ENCODE measurements at regions of chr12 and their contacts with region 1.

Region 1: GRCh38 chr12:120469450-120470149 is at the start of gene SRSF9:
- DNase-seq: peak; percentile 97 to 98 (median 97)
- H3K4me3 ChIP-seq: peak within 1 kb of the TSS; percentile 75 to 84
- H3K4me3 Mint-ChIP-seq: peak within 1 kb of the TSS; percentile 87 to 94 (median 91)
- H3K27ac ChIP-seq: peak within 1 kb of the TSS; percentile 79
- H3K27ac Mint-ChIP-seq: peak within 1 kb of the TSS; percentile 89 to 97 (median 92)
- H3K4me1 ChIP-seq: peaks cover 40% of the 10 kb centered on the region
- H3K4me1 Mint-ChIP-seq: peaks cover 10 to 62% (median 35%) of the 10 kb centered on the region in 4 donors
- H3K27me3 ChIP-seq: no peaks in the 10 kb centered on the region
- H3K27me3 Mint-ChIP-seq: no peaks in the 10 kb centered on the region
- total RNA-seq, gene SRSF9: 139 to 143 TPM

Region 2: DNA sequence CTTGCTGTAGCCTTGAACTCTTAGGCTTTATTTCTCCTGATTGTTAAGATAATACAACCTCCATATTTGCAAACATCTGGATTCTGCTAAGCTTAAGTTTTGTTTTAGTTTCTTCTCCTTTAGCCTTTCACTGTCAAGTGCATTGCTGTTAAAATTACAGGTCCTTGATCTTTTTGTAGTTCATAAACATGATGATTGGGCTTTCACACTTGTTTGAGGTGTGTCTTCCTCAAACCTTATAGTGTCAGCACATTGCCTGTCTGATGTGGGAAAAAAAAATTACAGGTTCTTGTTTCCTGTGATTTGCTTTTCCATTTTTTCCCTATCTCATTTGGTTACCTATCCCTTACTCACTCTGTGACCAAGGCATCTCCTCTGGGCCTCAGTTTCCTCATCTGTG is 421.3 kb before region 1 on chr12:
- CTCF ChIA-PET with region 1: no interaction called
- POLR2A ChIA-PET with region 1: no interaction called
- intact Hi-C with region 1: no loop called
- DNase-seq: peak in 4 of 5 donors; percentile 9 to 33 (median 14)
- H3K4me3 ChIP-seq: no peak overlapping the region
- H3K4me3 Mint-ChIP-seq: peak overlapping the region in 6 of 8 donors; percentile 5 to 64 (median 53)
- H3K27ac ChIP-seq: peak overlapping the region; percentile 37
- H3K27ac Mint-ChIP-seq: peak overlapping the region; percentile 77 to 94 (median 90)
- H3K4me1 ChIP-seq: peaks cover 35% of the 10 kb centered on the region
- H3K4me1 Mint-ChIP-seq: peaks cover 28 to 40% (median 35%) of the 10 kb centered on the region in 4 donors
- H3K27me3 ChIP-seq: no peaks in the 10 kb centered on the region
- H3K27me3 Mint-ChIP-seq: no peaks in the 10 kb centered on the region

Region 3: DNA sequence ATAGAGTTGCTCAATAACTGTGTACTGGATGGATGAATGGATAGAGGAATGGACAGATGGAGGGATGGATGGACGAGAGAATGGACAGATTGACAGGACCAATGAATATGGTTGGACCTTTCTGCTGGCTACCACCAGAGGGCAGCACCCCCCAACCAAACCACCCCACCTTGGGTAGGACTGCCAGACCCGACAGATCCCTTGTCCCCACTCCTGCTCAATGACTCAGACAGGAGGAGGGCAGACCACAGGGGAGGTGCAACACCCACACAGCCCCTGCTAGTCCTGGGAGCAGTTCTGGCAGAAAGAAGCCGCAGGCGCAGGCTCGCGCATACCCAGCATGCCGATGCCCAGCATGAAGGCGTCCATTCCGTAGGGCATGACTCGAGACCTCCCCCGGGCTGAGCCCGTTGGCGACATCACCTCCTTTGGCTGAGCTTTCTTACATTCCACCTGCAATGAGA is 113.0 kb before region 1 on chr12:
- CTCF ChIA-PET with region 1: interaction called, 7 read pairs
- POLR2A ChIA-PET with region 1: no interaction called
- intact Hi-C with region 1: loop called (anchors 1 kb)
- DNase-seq: peak; percentile 59 to 66 (median 63)
- H3K4me3 ChIP-seq: no peak overlapping the region
- H3K4me3 Mint-ChIP-seq: no peak overlapping the region
- H3K27ac ChIP-seq: no peak overlapping the region
- H3K27ac Mint-ChIP-seq: peak overlapping the region in 1 of 7 donors; percentile 57
- H3K4me1 ChIP-seq: no peaks in the 10 kb centered on the region
- H3K4me1 Mint-ChIP-seq: peaks cover 0 to 1% (median 0%) of the 10 kb centered on the region in 4 donors
- H3K27me3 ChIP-seq: no peaks in the 10 kb centered on the region
- H3K27me3 Mint-ChIP-seq: peaks cover 9 to 30% of the 10 kb centered on the region in 2 donors

Region 4: GRCh38 chr12:120445911-120446843 is 23.4 kb before region 1 on chr12 and contains the starts of genes GATC and TRIAP1:
- CTCF ChIA-PET with region 1: interaction called, 187 read pairs
- POLR2A ChIA-PET with region 1: interaction called, 28 read pairs
- intact Hi-C with region 1: loop called (anchors 2 kb)
- DNase-seq: peak; percentile 85 to 87 (median 86)
- H3K4me3 ChIP-seq: peak within 1 kb of the TSS; percentile 94 to 99
- H3K4me3 Mint-ChIP-seq: peak within 1 kb of the TSS; percentile 92 to 99 (median 99)
- H3K27ac ChIP-seq: peak within 1 kb of the TSS; percentile 96
- H3K27ac Mint-ChIP-seq: peak within 1 kb of the TSS; percentile 96 to 99 (median 98)
- H3K4me1 ChIP-seq: peaks cover 24% of the 10 kb centered on the region
- H3K4me1 Mint-ChIP-seq: peaks cover 14 to 42% (median 23%) of the 10 kb centered on the region in 4 donors
- H3K27me3 ChIP-seq: no peaks in the 10 kb centered on the region
- H3K27me3 Mint-ChIP-seq: no peaks in the 10 kb centered on the region
- total RNA-seq, gene GATC: 30.2 to 31.9 TPM
- total RNA-seq, gene TRIAP1: 17.3 to 22.8 TPM

Region 5: DNA sequence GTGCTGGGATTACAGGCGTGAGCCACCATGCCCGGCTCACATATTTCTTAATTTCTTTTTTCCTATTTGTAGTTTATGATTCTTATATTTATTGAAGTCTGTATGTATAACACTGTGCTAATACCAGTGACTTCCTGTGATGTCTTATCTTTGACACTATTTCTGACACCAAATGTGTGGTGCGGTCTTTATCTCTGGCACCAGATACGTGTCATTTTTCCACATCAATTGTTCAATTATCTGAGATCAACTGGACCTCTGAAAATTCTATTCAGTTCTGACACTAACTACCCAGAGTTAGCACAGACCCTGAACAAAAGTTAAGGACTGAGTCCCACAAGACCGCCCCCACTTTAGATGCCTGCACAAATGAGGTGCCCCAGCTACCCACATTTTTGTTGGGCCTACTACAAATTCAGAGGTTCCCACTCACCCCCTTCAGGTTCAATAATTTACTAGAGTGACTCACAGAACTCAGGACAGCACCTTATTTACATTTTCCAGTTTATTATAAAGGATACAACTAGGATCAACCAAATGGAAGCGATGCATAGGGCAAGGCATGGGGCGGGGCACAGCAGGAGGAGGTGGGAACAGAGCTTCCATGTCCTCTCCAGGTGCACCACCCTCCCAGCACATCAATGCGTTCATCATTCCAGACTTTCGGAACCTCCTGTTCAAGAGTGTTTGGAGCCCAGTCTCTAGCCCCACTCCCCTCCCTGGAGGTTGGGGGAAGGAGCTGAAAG is 11.6 kb after region 1 on chr12:
- CTCF ChIA-PET with region 1: interaction called, 15 read pairs
- POLR2A ChIA-PET with region 1: interaction called, 13 read pairs
- intact Hi-C with region 1: no loop called
- DNase-seq: peak in 4 of 5 donors; percentile 19 to 47 (median 32)
- H3K4me3 ChIP-seq: no peak overlapping the region
- H3K4me3 Mint-ChIP-seq: peak overlapping the region in 6 of 8 donors; percentile 33 to 67 (median 40)
- H3K27ac ChIP-seq: no peak overlapping the region
- H3K27ac Mint-ChIP-seq: peak overlapping the region; percentile 22 to 88 (median 76)
- H3K4me1 ChIP-seq: peaks cover 22% of the 10 kb centered on the region
- H3K4me1 Mint-ChIP-seq: peaks cover 7 to 29% (median 15%) of the 10 kb centered on the region in 4 donors
- H3K27me3 ChIP-seq: no peaks in the 10 kb centered on the region
- H3K27me3 Mint-ChIP-seq: no peaks in the 10 kb centered on the region

Region 6: GRCh38 chr12:120528861-120529525 is 59.4 kb after region 1 on chr12 and contains the start of gene COQ5:
- CTCF ChIA-PET with region 1: no interaction called
- POLR2A ChIA-PET with region 1: interaction called, 11 read pairs
- intact Hi-C with region 1: loop called (anchors 2 kb)
- DNase-seq: peak; percentile 79 to 86 (median 83)
- H3K4me3 ChIP-seq: peak within 1 kb of the TSS; percentile 82 to 84
- H3K4me3 Mint-ChIP-seq: peak within 1 kb of the TSS; percentile 98 to 100 (median 100)
- H3K27ac ChIP-seq: peak within 1 kb of the TSS; percentile 85
- H3K27ac Mint-ChIP-seq: peak within 1 kb of the TSS; percentile 96 to 100 (median 99)
- H3K4me1 ChIP-seq: peaks cover 24% of the 10 kb centered on the region
- H3K4me1 Mint-ChIP-seq: peaks cover 20 to 35% (median 23%) of the 10 kb centered on the region in 4 donors
- H3K27me3 ChIP-seq: no peaks in the 10 kb centered on the region
- H3K27me3 Mint-ChIP-seq: no peaks in the 10 kb centered on the region
- total RNA-seq, gene COQ5: 19.7 to 21.6 TPM

Region 7: DNA sequence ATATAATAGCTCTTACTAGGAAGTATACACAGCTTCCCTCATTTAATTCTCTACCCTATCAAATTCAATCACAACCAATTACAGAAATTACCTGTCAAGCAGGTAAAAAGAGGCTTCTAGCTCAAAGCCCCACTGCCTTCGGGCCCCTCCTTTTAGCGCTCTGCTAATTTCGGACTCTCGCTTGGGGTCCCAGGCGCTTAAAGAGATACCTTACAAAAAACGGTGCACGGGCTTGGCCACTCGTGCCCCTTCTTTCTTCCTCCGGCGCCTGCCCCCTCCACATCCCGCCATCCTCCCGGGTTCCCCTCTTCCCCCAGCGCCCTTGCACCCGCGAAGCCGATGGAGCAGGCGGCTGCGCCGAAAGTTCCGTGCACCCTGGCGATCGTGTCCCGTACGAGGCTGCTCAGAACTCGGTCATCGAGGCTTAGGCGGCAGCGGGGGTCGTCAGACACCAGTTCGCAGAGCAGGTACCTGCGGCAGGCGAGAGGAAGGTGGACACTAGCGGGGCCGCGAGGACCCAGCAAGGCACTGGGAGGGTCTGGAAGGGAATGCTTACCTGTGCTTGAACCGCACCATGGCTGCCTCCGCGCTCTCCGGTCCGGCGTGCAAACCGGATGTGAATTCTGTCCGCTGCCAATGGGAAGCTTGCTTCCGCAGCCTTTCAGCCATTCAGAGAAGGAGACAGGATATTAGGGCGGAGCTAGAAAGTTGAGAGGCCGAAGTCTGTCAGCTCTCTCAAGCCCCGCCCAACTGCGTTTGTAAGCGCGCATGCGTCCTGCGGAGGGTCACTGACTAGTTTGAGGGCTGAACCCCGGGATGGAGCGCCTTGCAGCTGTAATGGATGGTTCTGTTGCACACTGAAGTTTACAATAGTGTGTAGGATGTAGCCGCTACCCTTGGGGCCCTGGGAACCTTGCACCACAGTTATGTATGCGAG is 111.5 kb after region 1 on chr12 and contains the start of gene POP5:
- CTCF ChIA-PET with region 1: interaction called, 6 read pairs
- POLR2A ChIA-PET with region 1: interaction called, 13 read pairs
- intact Hi-C with region 1: no loop called
- DNase-seq: peak; percentile 90 to 96 (median 91)
- H3K4me3 ChIP-seq: peak within 1 kb of the TSS; percentile 90 to 94
- H3K4me3 Mint-ChIP-seq: peak within 1 kb of the TSS; percentile 96 to 99 (median 98)
- H3K27ac ChIP-seq: peak within 1 kb of the TSS; percentile 72
- H3K27ac Mint-ChIP-seq: peak within 1 kb of the TSS; percentile 92 to 98 (median 96)
- H3K4me1 ChIP-seq: peaks cover 34% of the 10 kb centered on the region
- H3K4me1 Mint-ChIP-seq: peaks cover 17 to 43% (median 37%) of the 10 kb centered on the region in 4 donors
- H3K27me3 ChIP-seq: no peaks in the 10 kb centered on the region
- H3K27me3 Mint-ChIP-seq: no peaks in the 10 kb centered on the region
- total RNA-seq, gene POP5: 70.4 to 70.7 TPM

Region 8: DNA sequence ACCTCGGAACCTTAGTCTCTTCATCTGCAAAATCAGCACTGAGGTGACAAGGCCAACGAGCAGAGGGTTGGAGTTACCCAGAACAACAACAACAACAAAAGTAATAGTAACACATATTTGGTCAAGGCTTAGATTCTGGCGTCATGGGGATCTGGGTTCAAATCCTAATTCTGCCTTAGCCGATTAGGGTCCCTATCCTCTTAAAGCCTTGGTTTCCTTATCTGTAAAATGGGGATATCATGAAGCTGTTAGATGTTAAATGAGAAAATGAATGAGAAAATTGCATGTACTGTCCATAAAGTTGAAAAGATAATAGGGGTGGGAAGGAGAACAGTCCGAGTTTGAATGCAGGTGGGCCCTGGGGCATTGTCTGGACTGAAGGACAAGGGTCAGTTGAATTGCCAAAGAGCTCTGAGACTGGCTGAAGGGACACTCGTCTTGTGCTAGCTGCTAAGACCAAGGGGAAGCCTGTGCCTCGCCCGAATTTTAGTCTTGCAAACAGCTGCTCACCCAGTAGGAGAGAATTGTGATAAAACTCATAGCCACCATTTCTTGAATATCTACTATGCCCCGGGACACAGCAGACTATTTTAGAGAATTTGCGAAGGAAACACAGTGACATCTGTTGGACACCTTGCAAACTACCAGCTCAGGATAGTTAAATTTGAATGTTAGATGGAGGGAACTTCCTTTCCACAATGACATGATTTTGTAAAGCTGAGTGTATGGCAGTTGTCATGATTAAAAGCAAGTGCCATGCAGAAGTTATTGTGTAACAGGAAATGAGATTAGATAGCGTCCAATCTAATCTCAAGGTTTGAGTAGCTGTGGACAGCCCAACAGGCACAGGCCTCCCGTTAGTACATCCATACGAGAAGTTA is 501.9 kb after region 1 on chr12:
- CTCF ChIA-PET with region 1: no interaction called
- POLR2A ChIA-PET with region 1: no interaction called
- intact Hi-C with region 1: no loop called
- DNase-seq: peak in 4 of 5 donors; percentile 59 to 68 (median 62)
- H3K4me3 ChIP-seq: no peak overlapping the region
- H3K4me3 Mint-ChIP-seq: no peak overlapping the region
- H3K27ac ChIP-seq: no peak overlapping the region
- H3K27ac Mint-ChIP-seq: peak overlapping the region in 2 of 7 donors; percentile 37 to 51
- H3K4me1 ChIP-seq: peaks cover 3% of the 10 kb centered on the region
- H3K4me1 Mint-ChIP-seq: peaks cover 6 to 9% (median 6%) of the 10 kb centered on the region in 4 donors
- H3K27me3 ChIP-seq: no peaks in the 10 kb centered on the region
- H3K27me3 Mint-ChIP-seq: no peaks in the 10 kb centered on the region

Measured in CD4-positive, alpha-beta memory T cell (primary cell).